Mammary epithelial cell (primary cell): ENCODE measurements at regions of chr7 and their contacts with region 1.

Region 1: DNA sequence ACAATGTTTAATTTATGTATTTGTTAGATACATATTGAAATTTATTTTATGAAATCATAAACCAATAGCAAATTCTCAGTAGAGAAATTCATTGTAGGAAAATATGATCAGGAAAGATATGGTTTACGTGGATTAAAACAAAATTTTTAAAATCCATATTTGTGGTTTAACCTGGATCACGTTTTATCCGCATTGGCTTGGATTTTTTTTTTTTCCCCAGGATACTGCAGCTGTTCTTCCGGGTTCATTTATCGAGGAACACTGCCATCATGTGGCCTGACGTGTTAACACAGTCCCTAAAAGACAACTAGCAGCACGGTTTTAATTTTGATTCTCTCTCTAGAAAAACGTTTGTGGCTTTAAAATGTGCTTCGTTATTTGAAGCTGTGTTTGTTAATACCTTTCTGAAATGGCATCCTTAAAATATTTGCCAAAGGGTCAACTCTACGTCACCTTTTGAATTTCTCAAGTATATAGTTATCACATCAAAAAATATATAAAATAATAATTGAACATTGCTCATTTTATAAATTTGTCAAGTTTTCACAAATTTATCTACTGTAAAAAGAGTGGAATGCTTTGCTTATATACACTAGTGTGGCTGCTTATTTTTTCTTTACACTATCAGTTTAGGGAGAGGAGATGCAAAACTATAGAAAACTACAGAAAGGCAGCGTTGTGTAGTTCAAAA is 8.7 kb upstream of the ASB4 start:
- DNase-seq: peak; percentile 37
- H3K4me3 ChIP-seq: no peak overlapping the region
- H3K27ac ChIP-seq: no peak overlapping the region
- H3K4me1 ChIP-seq: no peaks in the 10 kb centered on the region
- H3K27me3 ChIP-seq: no peaks in the 10 kb centered on the region
- CTCF ChIP-seq: peak; percentile 75 to 82

Region 2: GRCh38 chr7:94295850-94296249 is 1181.2 kb before region 1 on chr7:
- CTCF ChIA-PET with region 1: no interaction called
- dilution Hi-C with region 1: no loop called
- in situ Hi-C with region 1: no loop called
- intact Hi-C with region 1: loop called (anchors 10 kb)
- DNase-seq: peak; percentile 30
- H3K4me3 ChIP-seq: no peak overlapping the region
- H3K27ac ChIP-seq: no peak overlapping the region
- H3K4me1 ChIP-seq: peaks cover 19% of the 10 kb centered on the region
- H3K27me3 ChIP-seq: no peaks in the 10 kb centered on the region
- CTCF ChIP-seq: peak; percentile 34 to 60

Region 3: GRCh38 chr7:95045236-95045923 is 431.7 kb before region 1 on chr7:
- CTCF ChIA-PET with region 1: no interaction called
- dilution Hi-C with region 1: no loop called
- in situ Hi-C with region 1: no loop called
- intact Hi-C with region 1: loop called (anchors 5 kb)
- DNase-seq: peak; percentile 1
- H3K4me3 ChIP-seq: no peak overlapping the region
- H3K27ac ChIP-seq: no peak overlapping the region
- H3K4me1 ChIP-seq: no peaks in the 10 kb centered on the region
- H3K27me3 ChIP-seq: peaks cover 2% of the 10 kb centered on the region
- CTCF ChIP-seq: peak in 1 of 2 donors; percentile 46

Region 4: DNA sequence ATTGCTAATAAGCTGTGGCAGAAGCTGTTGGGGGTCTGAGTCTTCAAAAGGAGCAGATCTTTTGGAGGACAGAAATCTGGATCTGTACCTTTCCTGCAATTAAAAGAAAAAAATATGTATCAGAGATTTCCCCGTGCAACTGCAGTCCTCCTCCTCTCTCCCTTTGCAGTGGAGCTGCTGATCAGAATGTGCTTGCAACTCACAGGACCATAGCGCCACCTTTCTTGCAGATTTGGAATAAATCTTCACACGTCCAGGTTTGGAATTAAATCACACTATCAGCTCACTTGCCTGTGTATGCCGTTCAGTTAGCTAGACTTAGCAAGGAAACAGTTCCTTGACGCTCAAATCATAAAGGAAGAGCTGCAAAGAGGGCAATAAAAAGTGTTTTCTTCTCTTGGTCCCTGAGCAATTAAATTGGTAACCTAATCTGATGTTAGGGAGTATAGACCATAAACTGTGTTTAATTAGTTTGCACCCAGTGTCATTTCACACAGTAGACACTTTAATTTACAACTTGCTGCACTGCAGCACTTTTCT is 230.1 kb before region 1 on chr7:
- CTCF ChIA-PET with region 1: no interaction called
- dilution Hi-C with region 1: no loop called
- in situ Hi-C with region 1: no loop called
- intact Hi-C with region 1: loop called (anchors 2 kb)
- DNase-seq: peak; percentile 48
- H3K4me3 ChIP-seq: no peak overlapping the region
- H3K27ac ChIP-seq: no peak overlapping the region
- H3K4me1 ChIP-seq: no peaks in the 10 kb centered on the region
- H3K27me3 ChIP-seq: peaks cover 2% of the 10 kb centered on the region
- CTCF ChIP-seq: peak; percentile 77 to 81

Region 5: DNA sequence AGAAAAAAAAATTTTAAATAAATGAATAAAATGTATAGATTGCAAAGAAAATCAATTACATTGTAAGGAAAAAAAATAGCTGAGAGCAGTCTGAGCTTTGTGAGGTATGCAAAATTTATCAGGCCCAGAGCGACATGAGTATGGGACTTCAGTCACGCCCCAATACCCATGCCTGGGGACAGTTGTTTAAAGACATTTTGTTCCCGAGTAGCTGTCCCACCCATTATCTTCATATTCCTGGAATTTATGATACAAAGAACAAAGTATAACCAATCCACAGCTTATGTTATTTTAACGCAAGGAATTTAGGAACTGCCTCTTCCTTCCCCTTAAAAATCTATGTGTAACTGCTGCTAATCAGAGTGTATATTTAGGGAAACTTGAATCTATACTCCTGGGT is 40.6 kb before region 1 on chr7:
- CTCF ChIA-PET with region 1: interaction called, 22 read pairs
- dilution Hi-C with region 1: no loop called
- in situ Hi-C with region 1: no loop called
- intact Hi-C with region 1: no loop called
- DNase-seq: no peak
- H3K4me3 ChIP-seq: no peak overlapping the region
- H3K27ac ChIP-seq: no peak overlapping the region
- H3K4me1 ChIP-seq: peaks cover 13% of the 10 kb centered on the region
- H3K27me3 ChIP-seq: no peaks in the 10 kb centered on the region
- CTCF ChIP-seq: no peak

Region 6: DNA sequence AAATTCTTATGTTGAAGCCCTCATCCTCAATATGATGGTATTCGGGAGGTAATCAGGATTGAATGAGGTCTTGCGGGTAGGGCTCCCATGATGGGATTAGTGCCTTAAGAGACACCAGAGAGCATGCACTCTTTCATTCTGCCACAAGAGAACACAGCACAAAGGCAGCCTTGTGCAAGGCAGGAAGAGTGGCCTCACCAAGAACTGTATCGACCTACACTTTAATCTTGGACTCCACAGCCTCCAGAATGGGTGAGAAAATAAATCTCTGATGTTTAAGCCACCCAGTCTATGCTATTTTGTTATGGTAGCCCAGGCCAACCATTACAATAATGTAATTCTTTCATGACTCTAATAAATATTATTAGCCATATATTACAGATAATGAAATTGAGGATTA is 1224.2 kb after region 1 on chr7:
- CTCF ChIA-PET with region 1: no interaction called
- dilution Hi-C with region 1: no loop called
- in situ Hi-C with region 1: no loop called
- intact Hi-C with region 1: no loop called
- DNase-seq: no peak
- H3K4me3 ChIP-seq: no peak overlapping the region
- H3K27ac ChIP-seq: no peak overlapping the region
- H3K4me1 ChIP-seq: no peaks in the 10 kb centered on the region
- H3K27me3 ChIP-seq: no peaks in the 10 kb centered on the region
- CTCF ChIP-seq: no peak